ENCODE measurements at regions of chr4 and their contacts with region 1.

Region 1: GRCh38 chr4:15649914-15650545 is 5.1 kb downstream of the FBXL5 start:
- DNase-seq: peak; percentile 90
- H3K4me3 Mint-ChIP-seq: peak overlapping the region; percentile 63
- H3K27ac Mint-ChIP-seq: peak overlapping the region; percentile 69
- H3K4me1 Mint-ChIP-seq: peaks cover 42% of the 10 kb centered on the region
- H3K27me3 Mint-ChIP-seq: no peaks in the 10 kb centered on the region

Region 2: DNA sequence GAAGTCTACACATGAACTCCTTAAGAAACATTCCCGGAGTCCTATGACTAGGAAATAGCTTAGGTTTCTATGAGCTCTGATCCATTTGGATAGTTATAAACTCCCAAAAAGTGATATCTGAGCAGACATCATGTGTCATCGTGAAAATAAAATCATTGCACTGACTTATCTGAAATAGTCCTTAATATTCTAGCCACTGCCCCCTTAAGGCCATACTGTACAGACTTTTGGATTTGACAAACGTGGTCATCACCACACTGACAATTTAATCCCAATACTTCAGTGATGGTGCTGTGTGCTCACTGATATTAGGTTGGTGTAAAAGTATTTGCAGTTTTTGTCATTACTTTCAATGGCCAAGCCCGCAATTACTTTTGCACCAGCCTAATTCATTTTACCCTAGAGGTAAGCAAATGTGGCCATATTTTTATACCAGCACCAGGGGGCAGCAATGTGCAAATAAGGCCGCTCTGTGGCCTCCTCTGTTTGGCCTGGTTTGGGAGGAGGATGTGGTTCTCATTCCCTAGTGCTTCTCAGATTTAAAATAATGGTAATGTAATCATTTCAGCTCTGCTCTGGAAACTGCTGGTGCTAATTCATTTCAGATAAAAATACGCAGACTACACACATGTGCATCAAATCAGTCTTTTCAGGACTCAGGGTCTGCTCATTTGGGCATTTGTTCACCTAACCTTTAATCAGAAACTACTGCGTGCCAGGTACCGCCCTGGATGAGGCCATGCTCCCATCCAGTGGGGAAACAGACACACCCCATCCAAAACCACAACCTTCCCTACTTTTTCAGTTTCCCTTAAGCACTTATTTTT is 418.6 kb before region 1 on chr4:
- intact Hi-C with region 1: loop called (anchors 2 kb)
- DNase-seq: peak; percentile 91
- H3K4me3 Mint-ChIP-seq: no peak overlapping the region
- H3K27ac Mint-ChIP-seq: no peak overlapping the region
- H3K4me1 Mint-ChIP-seq: peaks cover 24% of the 10 kb centered on the region
- H3K27me3 Mint-ChIP-seq: peaks cover 1% of the 10 kb centered on the region

Region 3: DNA sequence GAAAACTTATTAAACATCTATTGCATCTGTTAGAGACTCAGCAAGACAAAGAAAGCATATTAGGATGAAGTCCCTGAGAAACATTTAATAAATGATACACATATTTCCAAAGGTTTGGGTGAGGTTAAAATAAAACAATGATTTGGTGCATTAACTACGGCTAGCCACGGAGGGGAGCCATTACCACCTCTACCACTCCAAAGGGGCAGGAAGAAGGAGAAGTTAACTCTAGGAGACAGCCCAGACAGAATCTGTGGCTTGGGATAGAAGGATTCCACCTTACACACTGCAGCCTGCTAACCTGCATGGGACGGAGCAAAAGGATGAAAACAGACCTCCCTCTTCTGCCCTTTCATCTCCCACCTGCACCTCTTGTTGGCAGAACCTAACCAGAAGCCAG is 411.3 kb before region 1 on chr4:
- intact Hi-C with region 1: loop called (anchors 2 kb)
- DNase-seq: peak; percentile 74
- H3K4me3 Mint-ChIP-seq: no peak overlapping the region
- H3K27ac Mint-ChIP-seq: no peak overlapping the region
- H3K4me1 Mint-ChIP-seq: peaks cover 13% of the 10 kb centered on the region
- H3K27me3 Mint-ChIP-seq: peaks cover 2% of the 10 kb centered on the region

Region 4: GRCh38 chr4:15375667-15376066 is 274.4 kb before region 1 on chr4:
- intact Hi-C with region 1: loop called (anchors 10 kb)
- DNase-seq: peak; percentile 65
- H3K4me3 Mint-ChIP-seq: no peak overlapping the region
- H3K27ac Mint-ChIP-seq: no peak overlapping the region
- H3K4me1 Mint-ChIP-seq: peaks cover 31% of the 10 kb centered on the region
- H3K27me3 Mint-ChIP-seq: no peaks in the 10 kb centered on the region

Region 5: GRCh38 chr4:15479089-15479912 is 170.7 kb before region 1 on chr4:
- intact Hi-C with region 1: loop called (anchors 1 kb)
- DNase-seq: peak; percentile 63
- H3K4me3 Mint-ChIP-seq: no peak overlapping the region
- H3K27ac Mint-ChIP-seq: no peak overlapping the region
- H3K4me1 Mint-ChIP-seq: no peaks in the 10 kb centered on the region
- H3K27me3 Mint-ChIP-seq: peaks cover 4% of the 10 kb centered on the region

Region 6: GRCh38 chr4:15665753-15666365 is 15.8 kb after region 1 on chr4:
- intact Hi-C with region 1: no loop called
- DNase-seq: no peak
- H3K4me3 Mint-ChIP-seq: no peak overlapping the region
- H3K27ac Mint-ChIP-seq: no peak overlapping the region
- H3K4me1 Mint-ChIP-seq: peaks cover 21% of the 10 kb centered on the region
- H3K27me3 Mint-ChIP-seq: no peaks in the 10 kb centered on the region

Region 7: GRCh38 chr4:15702941-15703403 is 52.9 kb after region 1 on chr4 and contains the start of gene BST1:
- intact Hi-C with region 1: no loop called
- DNase-seq: peak; percentile 87
- H3K4me3 Mint-ChIP-seq: peak within 1 kb of the TSS; percentile 90
- H3K27ac Mint-ChIP-seq: peak within 1 kb of the TSS; percentile 38
- H3K4me1 Mint-ChIP-seq: peaks cover 11% of the 10 kb centered on the region
- H3K27me3 Mint-ChIP-seq: peaks cover 28% of the 10 kb centered on the region
- total RNA-seq, gene BST1: 0.12 and 0.72 TPM in 2 replicates